OCI-LY7 (cell line): ENCODE measurements at regions of chr3 and their contacts with region 1.

Region 1: GRCh38 chr3:169945313-169945712 is 21.3 kb upstream of the SEC62 start:
- DNase-seq: peak; percentile 93
- H3K4me3 ChIP-seq: peak overlapping the region; percentile 55
- H3K27ac ChIP-seq: peak overlapping the region; percentile 99
- H3K4me1 ChIP-seq: peaks cover 98% of the 10 kb centered on the region
- CTCF ChIP-seq: 0 out of 2 replicates have a peak, but pooled peaks have one; percentile 35

Region 2: GRCh38 chr3:168095611-168096209 is 1849.6 kb before region 1 on chr3 and contains the start of gene GOLIM4:
- CTCF ChIA-PET with region 1: no interaction called
- POLR2A ChIA-PET with region 1: no interaction called
- intact Hi-C with region 1: loop called (anchors 10 kb)
- DNase-seq: peak; percentile 96
- H3K4me3 ChIP-seq: peak within 1 kb of the TSS; percentile 80
- H3K27ac ChIP-seq: peak within 1 kb of the TSS; percentile 84
- H3K4me1 ChIP-seq: peaks cover 31% of the 10 kb centered on the region
- CTCF ChIP-seq: peak; percentile 45; the same call in 1 of the 2 replicates
- total RNA-seq, gene GOLIM4: 31.2 and 42.6 TPM in 2 replicates

Region 3: DNA sequence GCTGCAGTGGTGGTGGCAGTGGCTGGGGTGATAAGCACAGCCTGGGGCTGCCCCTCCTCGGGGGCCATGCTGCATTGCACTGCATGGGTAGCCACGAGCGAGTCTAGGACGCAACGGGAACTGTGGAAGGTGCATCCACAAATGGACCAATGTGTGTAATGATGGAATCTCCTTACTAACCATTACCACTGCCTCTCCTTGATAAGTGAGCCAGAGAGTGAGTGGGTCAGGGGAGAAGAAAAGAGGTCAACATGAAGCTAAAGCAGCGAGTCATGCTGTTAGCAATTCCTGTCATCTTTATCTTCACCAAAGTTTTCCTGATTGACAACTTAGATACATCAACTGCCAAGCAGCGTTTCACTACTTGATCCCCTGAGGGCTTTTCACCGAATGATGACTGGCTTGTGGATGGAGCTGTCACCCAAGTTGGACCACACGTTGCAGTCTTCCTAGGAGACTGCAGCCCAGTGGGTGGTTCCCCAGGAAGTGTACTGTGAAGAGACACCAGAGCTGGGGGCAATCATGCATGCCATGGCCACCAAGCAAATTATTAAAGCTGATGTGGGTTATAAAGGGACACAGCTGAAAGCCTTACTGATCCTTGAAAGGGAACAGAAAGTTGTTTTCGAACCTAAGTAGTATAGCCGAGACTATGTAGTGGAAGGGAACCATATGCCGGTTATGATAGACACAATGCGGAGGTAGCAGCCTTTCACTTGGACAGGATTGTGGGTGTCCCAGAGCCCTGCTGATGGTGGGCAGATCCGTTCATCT is 13.4 kb before region 1 on chr3:
- CTCF ChIA-PET with region 1: interaction called, 4 read pairs
- POLR2A ChIA-PET with region 1: interaction called, 131 read pairs
- intact Hi-C with region 1: loop called (anchors 1 kb)
- DNase-seq: peak; percentile 94
- H3K4me3 ChIP-seq: peak overlapping the region; percentile 56
- H3K27ac ChIP-seq: peak overlapping the region; percentile 86
- H3K4me1 ChIP-seq: peaks cover 81% of the 10 kb centered on the region
- CTCF ChIP-seq: no peak

Region 4: GRCh38 chr3:169966428-169966950 is 21.2 kb after region 1 on chr3 and contains the start of gene SEC62:
- CTCF ChIA-PET with region 1: interaction called, 9 read pairs
- POLR2A ChIA-PET with region 1: interaction called, 559 read pairs
- intact Hi-C with region 1: loop called (anchors 1 kb)
- DNase-seq: peak; percentile 97
- H3K4me3 ChIP-seq: peak within 1 kb of the TSS; percentile 81
- H3K27ac ChIP-seq: peak within 1 kb of the TSS; percentile 88
- H3K4me1 ChIP-seq: peaks cover 67% of the 10 kb centered on the region
- CTCF ChIP-seq: peak; percentile 78
- total RNA-seq, gene SEC62: 64.5 and 77.4 TPM in 2 replicates

Region 5: GRCh38 chr3:169980055-169980454 is 34.7 kb after region 1 on chr3:
- CTCF ChIA-PET with region 1: no interaction called
- POLR2A ChIA-PET with region 1: interaction called, 37 read pairs
- intact Hi-C with region 1: no loop called
- DNase-seq: no peak
- H3K4me3 ChIP-seq: no peak overlapping the region
- H3K27ac ChIP-seq: peak overlapping the region; percentile 78
- H3K4me1 ChIP-seq: peaks cover 65% of the 10 kb centered on the region
- CTCF ChIP-seq: no peak

Region 6: GRCh38 chr3:170044795-170045244 is 99.5 kb after region 1 on chr3:
- CTCF ChIA-PET with region 1: interaction called, 3 read pairs
- POLR2A ChIA-PET with region 1: interaction called, 13 read pairs
- intact Hi-C with region 1: no loop called
- DNase-seq: peak; percentile 95
- H3K4me3 ChIP-seq: peak overlapping the region; percentile 57
- H3K27ac ChIP-seq: peak overlapping the region; percentile 98
- H3K4me1 ChIP-seq: peaks cover 75% of the 10 kb centered on the region
- CTCF ChIP-seq: no peak

Region 7: DNA sequence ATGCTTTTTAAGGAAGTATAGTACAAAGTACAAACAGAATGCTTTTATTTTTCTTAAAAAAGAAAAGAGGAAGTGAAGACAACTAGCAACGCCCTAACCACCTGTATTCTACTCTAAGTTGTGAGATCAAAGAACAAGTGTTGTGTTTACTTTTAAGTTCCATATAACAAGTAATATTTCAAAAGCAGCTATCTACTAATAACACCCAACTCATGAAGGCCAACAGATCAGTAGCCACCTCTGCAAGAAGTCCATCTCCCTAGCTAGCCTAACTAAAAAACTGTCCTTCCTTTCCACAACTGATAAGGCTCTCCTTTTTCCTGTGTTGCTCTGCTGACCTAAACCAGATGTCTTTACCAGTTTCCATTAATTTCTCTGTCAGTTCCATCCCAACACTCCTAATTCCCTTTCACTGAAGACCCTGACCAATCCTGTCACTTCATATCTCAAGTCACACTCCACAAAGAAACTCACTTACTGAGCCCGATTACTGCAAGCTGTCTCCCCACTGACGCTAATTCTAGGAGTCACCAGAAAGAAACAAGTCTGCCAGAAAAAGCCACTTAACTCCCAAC is 209.3 kb after region 1 on chr3:
- CTCF ChIA-PET with region 1: no interaction called
- POLR2A ChIA-PET with region 1: interaction called, 6 read pairs
- intact Hi-C with region 1: loop called (anchors 10 kb)
- DNase-seq: peak; percentile 90
- H3K4me3 ChIP-seq: peak overlapping the region; percentile 52
- H3K27ac ChIP-seq: peak overlapping the region; percentile 98
- H3K4me1 ChIP-seq: peaks cover 82% of the 10 kb centered on the region
- CTCF ChIP-seq: no peak